SK-N-SH (cell line): ENCODE measurements at regions of chr3 and their contacts with region 1.

Region 1: GRCh38 chr3:13091898-13092611 is 18.8 kb upstream of the IQSEC1 start:
- DNase-seq: peak; percentile 83
- H3K4me3 ChIP-seq: no peak overlapping the region; a peak in 1 of 4 replicates
- H3K27ac ChIP-seq: no peak overlapping the region
- H3K4me1 ChIP-seq: peaks cover 0 to 16% of the 10 kb centered on the region in 2 experiments; a peak in 1 of 4 replicates
- H3K27me3 ChIP-seq: no peaks in the 10 kb centered on the region
- CTCF ChIP-seq: peak; percentile 86
- EP300 ChIP-seq: no peak
- RAD21 ChIP-seq: peak; percentile 93

Region 2: GRCh38 chr3:13063225-13063624 is 28.8 kb before region 1 on chr3:
- CTCF ChIA-PET with region 1: interaction called, 11 read pairs
- POLR2A ChIA-PET with region 1: no interaction called
- DNase-seq: no peak
- H3K4me3 ChIP-seq: no peak overlapping the region
- H3K27ac ChIP-seq: no peak overlapping the region
- H3K4me1 ChIP-seq: peaks cover 0 to 40% of the 10 kb centered on the region in 2 experiments; a peak in 1 of 4 replicates
- H3K27me3 ChIP-seq: no peaks in the 10 kb centered on the region
- CTCF ChIP-seq: no peak
- EP300 ChIP-seq: no peak
- RAD21 ChIP-seq: no peak

Region 3: GRCh38 chr3:13189639-13190377 is 97.8 kb after region 1 on chr3:
- CTCF ChIA-PET with region 1: interaction called, 25 read pairs
- POLR2A ChIA-PET with region 1: no interaction called
- DNase-seq: no peak
- H3K4me3 ChIP-seq: no peak overlapping the region
- H3K27ac ChIP-seq: no peak overlapping the region
- H3K4me1 ChIP-seq: peaks cover 0 to 16% of the 10 kb centered on the region in 2 experiments; a peak in 1 of 4 replicates
- H3K27me3 ChIP-seq: no peaks in the 10 kb centered on the region
- CTCF ChIP-seq: no peak
- EP300 ChIP-seq: no peak
- RAD21 ChIP-seq: no peak

Region 4: GRCh38 chr3:13268961-13269441 is 176.9 kb after region 1 on chr3:
- CTCF ChIA-PET with region 1: interaction called, 10 read pairs
- POLR2A ChIA-PET with region 1: no interaction called
- DNase-seq: peak; percentile 81
- H3K4me3 ChIP-seq: no peak overlapping the region
- H3K27ac ChIP-seq: peak overlapping the region in 1 of 2 experiments; percentile 13; a peak in 2 of 4 replicates
- H3K4me1 ChIP-seq: peaks cover 0 to 20% of the 10 kb centered on the region in 2 experiments; a peak in 1 of 4 replicates
- H3K27me3 ChIP-seq: no peaks in the 10 kb centered on the region
- CTCF ChIP-seq: no peak
- EP300 ChIP-seq: no peak
- RAD21 ChIP-seq: no peak

Region 5: DNA sequence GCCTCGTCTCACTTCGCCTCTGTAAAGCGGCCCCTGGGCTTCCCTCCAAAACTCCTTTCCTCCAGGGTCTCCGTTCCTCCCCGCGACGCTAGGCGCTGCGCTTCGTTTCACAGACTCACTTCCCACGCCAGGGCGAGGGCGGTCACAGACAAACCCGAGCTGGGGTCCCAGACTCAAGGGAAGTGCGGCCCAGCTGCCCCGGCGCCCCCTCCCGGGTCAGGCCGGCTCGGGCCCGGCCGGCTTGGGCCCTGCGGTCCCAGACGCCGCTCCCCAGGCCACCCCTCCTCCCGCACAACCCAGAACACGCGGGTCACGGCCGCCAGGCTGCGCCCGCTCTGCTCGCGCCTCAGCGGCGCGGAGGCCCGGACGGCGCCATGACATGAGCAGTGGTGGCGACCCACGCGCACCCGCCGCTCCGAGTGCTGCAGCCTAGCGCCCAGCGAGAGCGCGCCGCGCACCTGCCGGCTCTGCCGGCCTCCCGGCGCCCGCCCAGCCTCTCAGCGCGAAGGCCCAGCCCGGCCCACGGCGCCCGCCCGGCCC is 327.5 kb after region 1 on chr3:
- CTCF ChIA-PET with region 1: interaction called, 16 read pairs
- POLR2A ChIA-PET with region 1: no interaction called
- DNase-seq: peak; percentile 86
- H3K4me3 ChIP-seq: peak overlapping the region in 1 of 2 experiments; percentile 58; a peak in 2 of 4 replicates
- H3K27ac ChIP-seq: peak overlapping the region in 1 of 2 experiments; percentile 63; a peak in 2 of 4 replicates
- H3K4me1 ChIP-seq: peaks cover 3 to 26% of the 10 kb centered on the region in 2 experiments; a peak in 2 of 4 replicates
- H3K27me3 ChIP-seq: 0 out of 2 replicates have a peak, but pooled peaks cover 8% of the 10 kb centered on the region
- CTCF ChIP-seq: no peak
- EP300 ChIP-seq: no peak
- RAD21 ChIP-seq: no peak

Region 6: GRCh38 chr3:13648060-13649001 is 556.3 kb after region 1 on chr3:
- CTCF ChIA-PET with region 1: interaction called, 15 read pairs
- POLR2A ChIA-PET with region 1: no interaction called
- DNase-seq: peak; percentile 94
- H3K4me3 ChIP-seq: peak overlapping the region in 1 of 2 experiments; percentile 42; a peak in 1 of 4 replicates
- H3K27ac ChIP-seq: no peak overlapping the region
- H3K4me1 ChIP-seq: peaks cover 0 to 10% of the 10 kb centered on the region in 2 experiments; a peak in 1 of 4 replicates
- H3K27me3 ChIP-seq: no peaks in the 10 kb centered on the region; the same call in 1 of the 2 replicates
- CTCF ChIP-seq: peak; percentile 98
- EP300 ChIP-seq: no peak
- RAD21 ChIP-seq: peak; percentile 99